ENCODE measurements at regions of chr16 and their contacts with region 1.

Region 1: DNA sequence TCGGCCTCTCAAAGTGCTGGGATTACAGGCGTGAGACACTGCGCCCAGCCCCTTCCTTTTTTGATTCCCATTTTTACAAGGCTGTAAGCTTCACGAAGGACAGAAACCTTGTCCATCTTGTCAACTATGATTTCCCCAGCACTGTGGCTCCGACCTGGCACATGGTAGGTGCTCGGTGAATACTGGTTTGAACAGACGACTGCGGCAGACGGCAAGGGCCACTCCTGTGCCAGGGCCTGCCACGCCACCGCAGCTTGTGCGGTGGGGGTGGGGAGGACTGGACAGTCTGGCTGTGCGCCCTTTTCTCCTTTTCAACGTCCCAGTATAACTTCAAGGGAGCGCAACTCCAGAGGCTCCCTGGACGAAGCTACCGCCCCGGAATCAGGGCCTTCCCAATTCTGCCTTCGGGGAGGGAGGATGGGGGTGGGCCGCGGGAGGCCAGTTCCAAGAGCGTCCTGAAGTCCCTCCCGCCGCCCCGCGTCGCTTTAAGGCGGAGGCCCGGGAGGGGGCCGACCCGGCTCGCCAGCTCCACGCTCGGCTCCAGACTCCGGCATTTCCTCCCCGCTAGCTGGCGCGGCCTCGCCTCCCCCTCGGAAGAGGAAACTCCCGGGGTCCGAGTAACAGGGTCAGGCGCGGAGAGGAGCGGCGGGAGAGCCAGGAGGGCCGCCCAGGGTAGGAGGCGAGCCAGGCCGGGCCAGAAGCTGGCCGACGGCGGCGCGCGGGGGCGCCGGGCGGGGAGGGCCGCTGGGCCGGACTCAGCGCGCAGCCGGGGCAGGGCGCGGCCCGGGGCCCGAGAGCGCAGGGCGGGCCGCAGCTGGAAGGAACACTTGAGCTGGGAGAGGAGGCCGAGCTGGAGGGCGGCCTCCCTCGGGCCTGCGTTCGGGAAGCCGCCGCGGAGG is at the start of gene ITPRIPL2:
- DNase-seq: peak; percentile 83
- H3K4me3 ChIP-seq: peak within 1 kb of the TSS; percentile 26 to 66 (median 44)
- H3K27ac ChIP-seq: peak within 1 kb of the TSS; percentile 89
- H3K4me1 ChIP-seq: peaks cover 38% of the 10 kb centered on the region
- H3K27me3 ChIP-seq: no peaks in the 10 kb centered on the region
- CTCF ChIP-seq: no peak
- POLR2A ChIP-seq: peak; percentile 76
- total RNA-seq, gene ITPRIPL2: 40.8 and 43.2 TPM in 2 replicates

Region 2: GRCh38 chr16:18789850-18790724 is 323.6 kb before region 1 on chr16 and contains the start of gene RPS15A:
- CTCF ChIA-PET with region 1: no interaction called
- POLR2A ChIA-PET with region 1: interaction called, 3 read pairs
- dilution Hi-C with region 1: loop called (anchors 25 kb)
- intact Hi-C with region 1: no loop called
- DNase-seq: peak; percentile 94
- H3K4me3 ChIP-seq: peak within 1 kb of the TSS; percentile 78 to 97 (median 86)
- H3K27ac ChIP-seq: peak within 1 kb of the TSS; percentile 72
- H3K4me1 ChIP-seq: peaks cover 41% of the 10 kb centered on the region
- H3K27me3 ChIP-seq: no peaks in the 10 kb centered on the region
- CTCF ChIP-seq: no peak
- POLR2A ChIP-seq: peak; percentile 88
- total RNA-seq, gene RPS15A: 1,299 and 1,300 TPM in 2 replicates

Region 3: GRCh38 chr16:19086322-19087199 is 27.1 kb before region 1 on chr16:
- CTCF ChIA-PET with region 1: interaction called, 12 read pairs
- POLR2A ChIA-PET with region 1: interaction called, 15 read pairs
- dilution Hi-C with region 1: no loop called
- intact Hi-C with region 1: loop called (anchors 1 kb)
- DNase-seq: peak; percentile 95
- H3K4me3 ChIP-seq: peak overlapping the region; percentile 34 to 69 (median 41)
- H3K27ac ChIP-seq: peak overlapping the region; percentile 61
- H3K4me1 ChIP-seq: peaks cover 15% of the 10 kb centered on the region
- H3K27me3 ChIP-seq: no peaks in the 10 kb centered on the region
- CTCF ChIP-seq: peak; percentile 99
- POLR2A ChIP-seq: peak; percentile 94

Region 4: GRCh38 chr16:19167710-19168370 is 54.1 kb after region 1 on chr16 and contains the start of gene SYT17:
- CTCF ChIA-PET with region 1: interaction called, 3 read pairs
- POLR2A ChIA-PET with region 1: no interaction called
- dilution Hi-C with region 1: no loop called
- intact Hi-C with region 1: loop called (anchors 1 kb)
- DNase-seq: peak; percentile 65
- H3K4me3 ChIP-seq: peak within 1 kb of the TSS; percentile 7 to 45 (median 44)
- H3K27ac ChIP-seq: no peak within 1 kb of the TSS
- H3K4me1 ChIP-seq: peaks cover 3% of the 10 kb centered on the region
- H3K27me3 ChIP-seq: peaks cover 6 to 32% of the 10 kb centered on the region in 2 experiments
- CTCF ChIP-seq: peak; percentile 75 to 76
- POLR2A ChIP-seq: no peak
- total RNA-seq, gene SYT17: 1.8 and 1.9 TPM in 2 replicates

Region 5: GRCh38 chr16:19375561-19376158 is 262.0 kb after region 1 on chr16:
- CTCF ChIA-PET with region 1: no interaction called
- POLR2A ChIA-PET with region 1: no interaction called
- dilution Hi-C with region 1: no loop called
- intact Hi-C with region 1: loop called (anchors 1 kb)
- DNase-seq: peak; percentile 71
- H3K4me3 ChIP-seq: no peak overlapping the region
- H3K27ac ChIP-seq: no peak overlapping the region
- H3K4me1 ChIP-seq: no peaks in the 10 kb centered on the region
- H3K27me3 ChIP-seq: peaks cover 0 to 3% of the 10 kb centered on the region in 2 experiments
- CTCF ChIP-seq: peak; percentile 59 to 67
- POLR2A ChIP-seq: no peak

Measured in endothelial cell of umbilical vein (primary cell).